ENCODE measurements at regions of chr3 and their contacts with region 1.

Region 1: DNA sequence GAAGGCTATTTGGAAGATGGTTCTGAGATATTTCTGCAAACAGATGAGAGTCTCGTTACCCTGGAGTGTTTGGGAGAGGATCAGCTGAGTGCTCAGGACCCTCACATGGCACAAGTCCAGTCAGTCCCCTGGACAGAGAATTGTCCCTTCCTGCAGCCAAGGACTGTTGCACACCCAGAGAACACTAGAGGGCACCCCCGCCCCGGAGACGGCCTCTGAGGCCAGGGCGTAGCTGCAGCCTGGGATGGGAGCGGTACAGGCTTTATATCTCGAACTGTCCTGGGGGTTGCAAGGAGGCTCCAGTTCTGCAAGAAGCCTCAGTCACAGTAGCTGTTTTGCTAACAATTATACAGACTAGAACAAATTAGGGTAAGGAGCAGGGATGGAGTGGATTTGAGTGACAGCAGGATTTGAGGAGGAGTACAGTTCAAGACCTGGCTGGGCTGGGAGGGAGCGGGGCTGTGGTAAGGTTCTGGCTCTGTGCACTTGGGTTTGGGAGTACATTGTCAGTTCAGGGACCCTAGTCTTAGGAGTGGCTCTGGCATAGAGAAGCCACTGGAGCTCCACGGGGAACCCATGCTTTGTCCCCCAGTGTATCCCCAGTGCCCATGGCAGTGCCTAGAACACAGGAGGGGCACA is 67.6 kb upstream of the HACD2 start:
- DNase-seq: peak; percentile 61
- ATAC-seq: peak; percentile 75
- H3K4me3 ChIP-seq: no peak overlapping the region
- H3K27ac ChIP-seq: peak overlapping the region; percentile 90
- H3K4me1 ChIP-seq: peaks cover 15% of the 10 kb centered on the region
- H3K27me3 ChIP-seq: no peaks in the 10 kb centered on the region
- CTCF ChIP-seq: peak; percentile 90
- POLR2A ChIP-seq: peak; percentile 45; the same call in 1 of the 2 replicates
- RAD21 ChIP-seq: peak; percentile 97

Region 2: DNA sequence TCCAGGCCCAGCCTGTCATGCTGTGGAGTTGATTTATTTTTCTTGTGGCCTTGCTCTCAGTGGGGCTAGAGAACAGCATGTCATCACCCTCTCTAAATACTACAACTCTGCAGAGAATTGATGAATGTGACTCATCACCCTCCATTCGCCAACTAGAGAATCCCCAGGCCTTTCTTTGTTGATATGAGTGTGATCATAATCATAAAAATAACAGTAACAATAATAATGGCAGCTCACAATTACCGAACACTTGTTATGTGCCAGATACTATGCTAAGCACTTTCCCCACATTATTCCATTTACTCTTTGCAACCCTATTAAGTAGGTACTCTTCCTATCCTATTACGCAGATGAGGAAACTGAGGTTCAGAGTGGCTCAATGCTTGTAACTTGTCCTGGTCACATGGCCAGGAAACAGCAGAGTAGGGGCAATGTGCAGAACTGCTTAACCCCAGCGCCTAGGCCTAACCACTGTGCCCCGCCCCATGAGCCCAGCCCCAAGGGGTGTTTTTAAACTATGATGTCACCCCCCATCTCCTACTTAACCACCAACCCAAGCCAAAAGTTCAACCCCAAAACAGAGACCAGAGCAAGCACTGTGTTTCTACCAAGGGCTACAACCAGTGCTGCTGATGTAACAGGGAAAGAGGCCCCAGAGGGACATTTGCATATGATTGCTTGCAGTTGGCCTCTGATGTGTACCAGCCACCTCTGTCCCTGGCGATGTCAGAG is 308.1 kb before region 1 on chr3:
- CTCF ChIA-PET with region 1: no interaction called
- POLR2A ChIA-PET with region 1: no interaction called
- dilution Hi-C with region 1: no loop called
- in situ Hi-C with region 1: no loop called
- intact Hi-C with region 1: no loop called
- DNase-seq: peak; percentile 74
- ATAC-seq: peak; percentile 81
- H3K4me3 ChIP-seq: no peak overlapping the region
- H3K27ac ChIP-seq: no peak overlapping the region
- H3K4me1 ChIP-seq: no peaks in the 10 kb centered on the region; the same call in 1 of the 2 replicates
- H3K27me3 ChIP-seq: peaks cover 56% of the 10 kb centered on the region
- CTCF ChIP-seq: no peak
- POLR2A ChIP-seq: no peak
- RAD21 ChIP-seq: no peak

Region 3: DNA sequence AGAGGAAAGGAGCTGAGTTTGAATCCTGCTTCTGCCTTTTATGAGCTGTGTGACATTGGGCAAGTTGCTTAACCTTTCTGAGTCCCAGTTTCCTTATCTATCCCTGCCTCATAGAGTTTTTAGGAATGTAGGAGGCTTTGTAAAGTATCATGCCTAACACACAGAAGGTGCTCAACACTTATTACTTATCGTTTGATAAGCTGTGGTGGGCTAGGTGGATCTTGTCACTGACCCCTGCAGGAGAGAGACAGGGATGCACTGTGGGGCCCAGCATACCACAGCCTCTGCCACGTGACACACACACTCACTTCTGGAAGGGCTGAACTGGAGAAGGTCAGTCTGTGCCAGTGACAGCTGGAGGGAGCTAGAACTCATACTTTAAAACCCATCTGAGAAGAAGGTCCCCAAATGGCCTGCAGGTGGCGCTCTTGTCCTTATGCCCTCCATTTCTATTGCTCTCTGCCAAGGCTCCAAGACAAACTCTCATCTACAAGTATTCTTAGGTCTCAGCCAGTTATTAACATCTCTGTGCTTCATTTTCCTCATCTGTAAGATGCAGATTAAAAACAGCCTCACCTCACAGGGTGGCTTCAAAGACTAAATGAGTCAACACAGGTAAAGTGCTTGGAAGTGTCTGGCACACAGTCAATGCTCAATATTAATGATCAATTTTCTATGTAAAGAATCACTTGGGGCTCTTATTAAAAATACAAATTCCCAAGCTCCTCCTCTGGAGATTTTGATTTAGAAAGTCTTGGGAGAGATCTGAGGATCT is 10.1 kb before region 1 on chr3:
- CTCF ChIA-PET with region 1: interaction called, 13 read pairs
- POLR2A ChIA-PET with region 1: interaction called, 3 read pairs
- dilution Hi-C with region 1: no loop called
- in situ Hi-C with region 1: no loop called
- intact Hi-C with region 1: no loop called
- DNase-seq: peak; percentile 95
- ATAC-seq: peak; percentile 91
- H3K4me3 ChIP-seq: no peak overlapping the region
- H3K27ac ChIP-seq: no peak overlapping the region
- H3K4me1 ChIP-seq: peaks cover 3% of the 10 kb centered on the region
- H3K27me3 ChIP-seq: no peaks in the 10 kb centered on the region
- CTCF ChIP-seq: peak; percentile 96
- POLR2A ChIP-seq: no peak
- RAD21 ChIP-seq: peak; percentile 79

Region 4: DNA sequence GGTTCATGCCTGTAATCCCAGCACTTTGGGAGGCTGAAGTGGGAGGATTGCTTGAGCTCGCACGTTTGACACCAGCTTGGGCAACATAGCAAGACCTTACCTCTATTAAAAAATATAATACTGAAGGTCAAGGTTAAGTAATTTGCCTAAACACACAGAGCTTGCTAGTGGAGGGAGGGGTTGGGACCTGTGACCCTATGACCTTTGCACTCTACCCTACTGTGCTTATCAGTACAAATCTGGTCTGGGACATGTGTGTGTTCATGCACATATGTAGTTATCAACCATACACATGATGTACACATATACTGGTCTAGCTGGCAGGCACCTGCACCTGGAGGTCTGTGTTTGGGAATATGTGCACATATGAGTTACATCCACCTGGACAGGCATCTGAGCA is 50.3 kb after region 1 on chr3:
- CTCF ChIA-PET with region 1: interaction called, 8 read pairs
- POLR2A ChIA-PET with region 1: no interaction called
- dilution Hi-C with region 1: no loop called
- in situ Hi-C with region 1: no loop called
- intact Hi-C with region 1: loop called (anchors 1 kb)
- DNase-seq: no peak
- ATAC-seq: no peak
- H3K4me3 ChIP-seq: no peak overlapping the region
- H3K27ac ChIP-seq: no peak overlapping the region
- H3K4me1 ChIP-seq: peaks cover 35% of the 10 kb centered on the region
- H3K27me3 ChIP-seq: no peaks in the 10 kb centered on the region
- CTCF ChIP-seq: no peak
- POLR2A ChIP-seq: no peak
- RAD21 ChIP-seq: no peak

Region 5: GRCh38 chr3:123719862-123720453 is 67.5 kb after region 1 on chr3:
- CTCF ChIA-PET with region 1: interaction called, 3 read pairs
- POLR2A ChIA-PET with region 1: no interaction called
- dilution Hi-C with region 1: no loop called
- in situ Hi-C with region 1: no loop called
- intact Hi-C with region 1: loop called (anchors 1 kb)
- DNase-seq: no peak
- ATAC-seq: peak; percentile 2; the same call in 1 of the 2 replicates
- H3K4me3 ChIP-seq: no peak overlapping the region
- H3K27ac ChIP-seq: peak overlapping the region; percentile 67; the same call in 1 of the 2 replicates
- H3K4me1 ChIP-seq: peaks cover 20% of the 10 kb centered on the region
- H3K27me3 ChIP-seq: no peaks in the 10 kb centered on the region
- CTCF ChIP-seq: no peak
- POLR2A ChIP-seq: no peak
- RAD21 ChIP-seq: no peak

Region 6: DNA sequence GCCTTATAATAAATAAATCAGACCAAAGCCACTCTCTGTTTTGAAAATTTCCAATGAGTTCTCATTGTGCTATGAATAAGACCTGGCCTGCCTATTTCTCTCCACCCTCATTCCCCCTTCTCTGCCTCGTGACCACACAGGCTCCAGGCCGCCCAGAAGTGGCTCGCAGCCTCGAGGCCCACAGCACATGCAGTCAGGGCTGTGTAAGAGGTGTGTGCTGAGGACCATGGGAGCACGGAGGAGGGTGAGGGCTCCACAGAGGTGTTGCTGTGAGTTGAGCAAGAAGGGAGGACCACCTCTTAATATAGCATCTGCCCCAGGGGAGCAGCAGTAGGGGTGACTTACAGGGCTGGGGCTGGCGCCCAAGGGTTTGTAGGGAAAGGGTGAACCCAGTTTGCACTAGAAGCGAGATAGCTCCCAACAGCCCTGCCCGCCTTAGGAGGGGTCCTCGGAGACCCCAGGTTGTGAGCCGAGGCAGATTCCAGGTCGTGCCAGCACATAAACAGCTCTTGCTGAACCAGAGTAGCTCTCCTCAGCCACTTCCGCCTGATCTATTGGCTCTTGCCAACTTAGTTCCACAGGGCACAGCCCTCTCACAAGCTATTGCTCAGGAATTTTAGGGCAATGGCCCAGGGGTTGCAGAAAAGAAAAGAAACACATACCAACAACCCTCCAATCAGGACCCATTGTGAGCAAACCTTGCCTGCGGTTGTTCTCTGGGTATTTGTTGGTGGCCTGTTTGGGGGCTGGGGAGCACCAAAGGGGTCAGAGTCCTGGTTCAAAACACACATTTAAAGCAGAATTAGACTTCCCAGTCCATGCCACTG is 113.9 kb after region 1 on chr3:
- CTCF ChIA-PET with region 1: no interaction called
- POLR2A ChIA-PET with region 1: no interaction called
- dilution Hi-C with region 1: no loop called
- in situ Hi-C with region 1: no loop called
- intact Hi-C with region 1: no loop called
- DNase-seq: no peak
- ATAC-seq: peak; percentile 9; the same call in 1 of the 2 replicates
- H3K4me3 ChIP-seq: no peak overlapping the region
- H3K27ac ChIP-seq: peak overlapping the region; percentile 79
- H3K4me1 ChIP-seq: peaks cover 17% of the 10 kb centered on the region
- H3K27me3 ChIP-seq: no peaks in the 10 kb centered on the region
- CTCF ChIP-seq: no peak
- POLR2A ChIP-seq: no peak
- RAD21 ChIP-seq: no peak

Region 7: GRCh38 chr3:123788710-123789495 is 136.4 kb after region 1 on chr3:
- CTCF ChIA-PET with region 1: no interaction called
- POLR2A ChIA-PET with region 1: no interaction called
- dilution Hi-C with region 1: no loop called
- in situ Hi-C with region 1: no loop called
- intact Hi-C with region 1: no loop called
- DNase-seq: peak; percentile 61
- ATAC-seq: peak; percentile 40
- H3K4me3 ChIP-seq: no peak overlapping the region
- H3K27ac ChIP-seq: peak overlapping the region; percentile 81
- H3K4me1 ChIP-seq: peaks cover 44% of the 10 kb centered on the region
- H3K27me3 ChIP-seq: no peaks in the 10 kb centered on the region
- CTCF ChIP-seq: no peak
- POLR2A ChIP-seq: no peak
- RAD21 ChIP-seq: peak; percentile 15; the same call in 1 of the 2 replicates

Region 8: GRCh38 chr3:123876858-123877257 is 224.4 kb after region 1 on chr3:
- CTCF ChIA-PET with region 1: no interaction called
- POLR2A ChIA-PET with region 1: no interaction called
- dilution Hi-C with region 1: no loop called
- in situ Hi-C with region 1: no loop called
- intact Hi-C with region 1: loop called (anchors 10 kb)
- DNase-seq: no peak
- ATAC-seq: no peak
- H3K4me3 ChIP-seq: no peak overlapping the region
- H3K27ac ChIP-seq: no peak overlapping the region
- H3K4me1 ChIP-seq: peaks cover 19% of the 10 kb centered on the region
- H3K27me3 ChIP-seq: no peaks in the 10 kb centered on the region
- CTCF ChIP-seq: peak; percentile 21
- POLR2A ChIP-seq: no peak
- RAD21 ChIP-seq: no peak

Region 9: GRCh38 chr3:124084022-124084881 is 431.8 kb after region 1 on chr3:
- CTCF ChIA-PET with region 1: no interaction called
- POLR2A ChIA-PET with region 1: no interaction called
- dilution Hi-C with region 1: no loop called
- in situ Hi-C with region 1: no loop called
- intact Hi-C with region 1: no loop called
- DNase-seq: peak; percentile 20
- ATAC-seq: peak; percentile 61
- H3K4me3 ChIP-seq: no peak overlapping the region
- H3K27ac ChIP-seq: no peak overlapping the region
- H3K4me1 ChIP-seq: peaks cover 2% of the 10 kb centered on the region; the same call in 1 of the 2 replicates
- H3K27me3 ChIP-seq: peaks cover 7% of the 10 kb centered on the region
- CTCF ChIP-seq: no peak
- POLR2A ChIP-seq: no peak
- RAD21 ChIP-seq: no peak

Measured in IMR-90 (cell line).